ENCODE measurements at regions of chr7 and their contacts with region 1.

Region 1: GRCh38 chr7:45136106-45137060 is 21.2 kb upstream of the RAMP3 start:
- DNase-seq: peak in 1 of 2 donors; percentile 32
- ATAC-seq: peak; percentile 81

Region 2: DNA sequence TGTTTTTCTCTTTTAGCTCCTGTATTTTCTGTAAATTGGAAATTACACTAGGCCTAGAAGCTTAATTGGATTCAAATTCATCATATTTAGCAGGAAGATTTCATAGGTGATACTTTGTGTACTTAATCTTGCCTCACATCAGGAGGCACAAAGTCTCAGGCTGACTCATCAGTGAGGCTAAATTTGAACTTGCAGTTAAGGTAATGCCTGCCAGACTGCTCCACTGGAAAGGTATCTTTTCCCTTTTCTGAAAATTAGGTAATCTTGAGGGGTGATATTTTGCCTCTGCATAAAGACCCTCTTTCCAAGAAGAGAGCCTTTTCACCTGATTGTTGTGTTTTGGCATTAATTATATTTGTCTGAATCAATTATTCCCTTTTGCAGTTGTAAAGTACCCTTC is 325.3 kb before region 1 on chr7:
- intact Hi-C with region 1: no loop called
- DNase-seq: no peak
- ATAC-seq: peak; percentile 49

Region 3: DNA sequence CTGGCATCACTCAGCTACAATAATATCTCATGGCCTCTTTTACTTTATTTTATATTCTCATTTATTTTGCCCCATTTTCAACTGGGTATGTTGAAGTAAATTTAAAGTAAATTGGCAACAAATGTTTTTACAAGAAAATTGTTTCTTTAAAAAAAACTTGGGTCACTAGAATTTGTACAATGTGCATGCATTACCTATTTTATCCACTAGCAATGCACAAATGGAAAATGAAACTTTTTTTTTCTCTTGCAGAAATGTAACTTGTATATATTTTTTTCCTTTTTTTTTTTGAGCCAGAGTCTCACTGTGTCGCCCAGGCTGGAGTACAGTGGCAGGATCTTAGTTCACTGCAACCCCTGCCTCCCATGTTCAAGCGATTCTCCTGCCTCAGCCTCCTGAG is 278.2 kb before region 1 on chr7:
- intact Hi-C with region 1: loop called in 1 of 2 experiments (anchors 10 kb)
- DNase-seq: no peak
- ATAC-seq: no peak

Region 4: DNA sequence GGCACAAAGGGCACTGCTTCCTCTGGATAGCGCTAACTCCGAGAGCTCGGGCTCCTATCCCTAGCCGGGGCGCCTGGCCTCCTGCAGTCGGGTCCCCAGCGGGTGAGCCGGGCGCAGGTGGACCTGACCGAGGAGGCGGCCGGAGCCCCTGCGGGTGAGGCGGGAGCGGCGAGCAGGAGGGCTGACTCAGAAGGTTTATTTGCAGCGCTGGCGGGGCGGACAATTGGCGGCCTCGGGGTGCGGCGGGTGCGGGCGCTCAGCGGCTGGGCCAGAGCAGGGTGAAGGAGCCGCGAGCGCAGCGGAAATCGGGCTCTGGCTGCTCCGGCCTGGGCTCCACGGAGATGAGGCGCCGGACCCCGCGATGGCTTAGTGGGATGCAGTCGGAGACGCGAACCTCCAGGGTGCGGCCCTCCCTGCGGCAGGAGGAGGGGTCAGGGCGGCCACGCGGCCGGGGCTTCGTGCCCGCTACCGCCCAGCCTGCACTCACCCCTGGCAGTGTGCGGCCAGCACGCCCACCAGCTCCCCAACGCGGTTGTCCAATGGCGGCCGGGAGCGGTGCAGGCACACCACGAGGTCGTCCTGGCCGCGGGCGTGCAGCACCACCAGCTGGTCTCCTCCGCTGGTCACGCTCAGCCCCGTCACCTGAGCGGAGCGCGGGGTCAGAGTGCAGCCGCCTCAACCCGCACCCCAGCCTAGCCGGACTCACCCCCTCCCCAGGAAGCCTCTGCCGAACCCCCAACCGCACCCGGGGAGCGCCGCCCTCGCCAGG is 173.7 kb before region 1 on chr7:
- intact Hi-C with region 1: loop called in 1 of 2 experiments (anchors 10 kb)
- DNase-seq: peak in 1 of 2 donors; percentile 17
- ATAC-seq: peak; percentile 66

Region 5: DNA sequence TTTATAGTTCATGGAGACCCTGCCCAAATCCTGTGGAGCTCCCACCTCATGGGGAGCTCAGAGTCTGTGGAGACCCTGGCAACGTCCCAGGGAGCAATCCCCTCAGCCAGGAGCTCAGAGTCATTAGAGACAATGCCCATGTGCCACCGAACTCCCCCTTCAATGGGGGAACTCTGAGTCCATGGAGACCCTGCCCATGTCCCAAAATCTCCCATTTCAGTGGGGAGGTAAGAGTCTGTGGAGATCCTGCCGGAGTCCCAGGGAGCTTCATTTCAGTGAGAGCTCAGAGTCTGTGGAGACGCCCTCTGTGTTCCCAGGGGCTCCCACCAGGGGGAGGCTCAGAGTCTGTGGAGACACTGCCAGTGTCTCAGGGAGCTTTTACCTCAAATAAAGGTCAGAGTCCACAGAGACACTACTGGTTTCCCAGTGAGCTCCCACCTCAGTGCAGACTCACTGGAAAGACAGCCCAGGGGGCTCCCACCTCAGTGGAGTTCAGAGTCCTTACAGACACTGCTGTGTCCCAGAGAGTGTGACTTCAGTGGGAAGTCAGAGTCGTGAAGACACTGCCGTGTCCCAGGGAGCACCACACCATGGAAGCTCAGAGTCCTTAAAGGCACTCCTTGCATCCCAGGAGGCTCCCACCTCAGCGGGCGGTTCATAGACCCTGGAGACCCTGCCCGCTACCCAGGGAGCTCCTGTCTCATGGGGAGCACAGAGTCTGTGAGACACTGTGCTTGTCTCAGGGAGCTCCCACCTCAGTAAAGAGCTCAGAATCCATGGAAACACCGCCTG is 162.6 kb before region 1 on chr7:
- intact Hi-C with region 1: loop called (anchors 10 kb)
- DNase-seq: peak in 1 of 2 donors; percentile 74
- ATAC-seq: peak; percentile 89

Region 6: DNA sequence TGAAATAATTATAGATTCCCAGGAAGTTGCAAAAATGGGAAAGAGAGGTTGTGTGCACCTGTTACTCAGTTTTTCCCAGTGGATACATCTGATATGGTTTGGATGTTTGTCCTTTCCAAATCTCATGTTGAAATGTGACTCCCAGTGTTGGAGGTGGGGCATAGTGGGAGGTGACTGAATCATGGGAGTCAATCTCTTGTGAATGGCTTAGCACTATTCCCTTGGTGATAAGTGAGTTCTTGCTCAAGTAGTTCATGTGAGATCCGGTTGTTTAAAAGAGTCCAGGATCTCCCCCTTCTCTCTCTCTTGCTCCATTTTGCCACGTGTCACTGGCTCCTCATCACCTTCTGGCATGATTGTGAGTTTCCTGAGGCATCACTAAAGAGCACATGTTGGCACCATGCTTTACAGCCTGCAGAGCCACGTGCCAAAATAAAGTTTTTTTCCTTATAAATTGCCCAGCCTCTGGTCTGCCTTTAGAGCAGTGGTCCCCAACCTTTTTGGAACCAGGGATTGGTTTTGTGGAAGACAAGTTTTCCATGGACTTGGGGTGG is 170.4 kb after region 1 on chr7:
- intact Hi-C with region 1: no loop called
- DNase-seq: no peak
- ATAC-seq: no peak

Measured in left colon (tissue), 2 donors.